ENCODE measurements at regions of chr10 and their contacts with region 1.

Region 1: DNA sequence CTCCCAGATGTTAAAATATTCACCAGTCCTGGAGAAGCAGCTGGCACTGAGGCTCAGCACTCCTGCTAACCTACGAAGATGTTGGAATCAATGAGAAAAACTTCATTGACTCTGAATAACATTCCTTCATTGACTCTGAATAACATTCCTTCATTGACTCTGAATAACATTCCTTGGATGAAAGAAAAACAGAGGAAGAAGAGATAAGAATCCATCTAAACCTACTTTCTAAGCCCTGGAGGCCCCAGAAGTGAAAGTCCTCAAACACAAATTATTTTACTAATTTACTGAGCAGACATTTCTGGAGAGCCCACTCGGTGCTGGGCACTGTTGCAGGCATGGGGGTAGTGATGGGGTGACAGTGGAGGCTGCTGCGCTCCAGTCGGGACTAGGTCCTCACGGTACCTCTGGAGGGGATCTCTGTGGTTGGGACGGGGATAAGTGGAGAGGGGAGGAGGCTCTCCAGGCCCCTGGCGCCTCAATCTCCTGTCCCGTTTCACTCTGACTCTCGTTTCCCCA is 254.1 kb downstream of the WDR37 start:
- DNase-seq: peak; percentile 25 to 66
- H3K4me3 ChIP-seq: peak overlapping the region in 3 of 4 experiments; percentile 21 to 46 (median 38); a peak in 5 of 8 replicates
- H3K27ac ChIP-seq: peak overlapping the region; percentile 96
- H3K4me1 ChIP-seq: peaks cover 15 to 23% (median 22%) of the 10 kb centered on the region in 4 experiments
- H3K27me3 ChIP-seq: no peaks in the 10 kb centered on the region
- CTCF ChIP-seq: no peak
- EP300 ChIP-seq: peak in 1 of 2 experiments; percentile 87; a peak in 2 of 3 replicates
- POLR2A ChIP-seq: no peak; a peak in 1 of 3 replicates
- RAD21 ChIP-seq: no peak

Region 2: GRCh38 chr10:1323951-1324350 is 13.6 kb after region 1 on chr10:
- CTCF ChIA-PET with region 1: interaction called, 3 read pairs
- POLR2A ChIA-PET with region 1: interaction called, 11 read pairs
- DNase-seq: no peak
- H3K4me3 ChIP-seq: no peak overlapping the region
- H3K27ac ChIP-seq: no peak overlapping the region
- H3K4me1 ChIP-seq: 0 out of 7 replicates have a peak, but pooled peaks cover 0 to 3% (median 0%) of the 10 kb centered on the region in 4 experiments
- H3K27me3 ChIP-seq: no peaks in the 10 kb centered on the region
- CTCF ChIP-seq: no peak
- EP300 ChIP-seq: no peak
- POLR2A ChIP-seq: no peak
- RAD21 ChIP-seq: no peak

Measured in H1 (cell line).